ENCODE measurements at regions of chr6 and their contacts with region 1.

Region 1: GRCh38 chr6:108835218-108835850 is 12.9 kb upstream of the ARMC2 start:
- DNase-seq: peak; percentile 85
- ATAC-seq: peak; percentile 99
- H3K4me3 ChIP-seq: no peak overlapping the region
- H3K27ac ChIP-seq: no peak overlapping the region
- H3K4me1 ChIP-seq: no peaks in the 10 kb centered on the region
- H3K27me3 ChIP-seq: no peaks in the 10 kb centered on the region; the same call in 1 of the 2 replicates
- CTCF ChIP-seq: peak; percentile 98

Region 2: GRCh38 chr6:108348655-108349349 is 486.5 kb before region 1 on chr6:
- CTCF ChIA-PET with region 1: no interaction called
- POLR2A ChIA-PET with region 1: interaction called, 14 read pairs
- in situ Hi-C with region 1: no loop called
- intact Hi-C with region 1: no loop called
- DNase-seq: no peak
- ATAC-seq: no peak
- H3K4me3 ChIP-seq: no peak overlapping the region
- H3K27ac ChIP-seq: no peak overlapping the region
- H3K4me1 ChIP-seq: no peaks in the 10 kb centered on the region
- H3K27me3 ChIP-seq: no peaks in the 10 kb centered on the region
- CTCF ChIP-seq: no peak

Region 3: DNA sequence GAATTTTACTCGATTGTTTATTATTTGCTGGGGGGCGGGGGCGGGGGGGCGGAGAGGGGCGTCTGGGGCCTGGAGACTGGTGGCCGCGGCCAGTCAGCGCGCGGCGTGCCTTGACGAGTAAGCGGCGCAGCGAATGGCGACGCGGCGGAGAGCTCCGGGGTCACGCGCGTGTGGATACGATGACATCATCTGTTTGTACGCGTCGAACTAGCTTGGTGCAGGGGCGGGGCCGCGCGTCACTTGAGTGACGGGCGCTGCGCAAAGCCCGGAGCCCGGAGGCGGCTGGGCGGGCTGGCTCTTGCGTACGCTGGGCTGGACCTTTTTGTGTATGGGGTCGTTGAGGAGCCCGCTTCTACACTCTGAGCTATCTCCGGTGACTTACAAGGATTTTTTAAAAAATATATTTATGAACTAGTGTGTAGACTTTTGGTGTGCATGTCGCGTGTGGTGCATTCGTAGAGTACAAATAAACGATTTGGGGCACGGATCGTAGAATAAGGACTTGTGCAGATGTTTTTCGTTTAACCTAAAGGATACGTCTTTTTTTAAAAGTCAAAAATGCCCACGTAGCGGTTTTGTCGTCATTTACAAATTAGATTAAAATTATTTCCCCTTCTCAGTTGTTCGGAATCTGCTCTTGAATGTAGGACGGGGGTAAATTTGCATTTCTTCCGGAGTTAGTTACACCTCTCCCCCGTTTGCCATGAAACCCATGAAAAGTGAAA is 276.8 kb before region 1 on chr6:
- CTCF ChIA-PET with region 1: interaction called, 4 read pairs
- POLR2A ChIA-PET with region 1: no interaction called
- in situ Hi-C with region 1: no loop called
- intact Hi-C with region 1: loop called (anchors 5 kb)
- DNase-seq: peak; percentile 94
- ATAC-seq: peak; percentile 76
- H3K4me3 ChIP-seq: peak overlapping the region; percentile 96 to 98
- H3K27ac ChIP-seq: peak overlapping the region; percentile 82
- H3K4me1 ChIP-seq: peaks cover 13% of the 10 kb centered on the region
- H3K27me3 ChIP-seq: peaks cover 3% of the 10 kb centered on the region; the same call in 1 of the 2 replicates
- CTCF ChIP-seq: no peak

Region 4: DNA sequence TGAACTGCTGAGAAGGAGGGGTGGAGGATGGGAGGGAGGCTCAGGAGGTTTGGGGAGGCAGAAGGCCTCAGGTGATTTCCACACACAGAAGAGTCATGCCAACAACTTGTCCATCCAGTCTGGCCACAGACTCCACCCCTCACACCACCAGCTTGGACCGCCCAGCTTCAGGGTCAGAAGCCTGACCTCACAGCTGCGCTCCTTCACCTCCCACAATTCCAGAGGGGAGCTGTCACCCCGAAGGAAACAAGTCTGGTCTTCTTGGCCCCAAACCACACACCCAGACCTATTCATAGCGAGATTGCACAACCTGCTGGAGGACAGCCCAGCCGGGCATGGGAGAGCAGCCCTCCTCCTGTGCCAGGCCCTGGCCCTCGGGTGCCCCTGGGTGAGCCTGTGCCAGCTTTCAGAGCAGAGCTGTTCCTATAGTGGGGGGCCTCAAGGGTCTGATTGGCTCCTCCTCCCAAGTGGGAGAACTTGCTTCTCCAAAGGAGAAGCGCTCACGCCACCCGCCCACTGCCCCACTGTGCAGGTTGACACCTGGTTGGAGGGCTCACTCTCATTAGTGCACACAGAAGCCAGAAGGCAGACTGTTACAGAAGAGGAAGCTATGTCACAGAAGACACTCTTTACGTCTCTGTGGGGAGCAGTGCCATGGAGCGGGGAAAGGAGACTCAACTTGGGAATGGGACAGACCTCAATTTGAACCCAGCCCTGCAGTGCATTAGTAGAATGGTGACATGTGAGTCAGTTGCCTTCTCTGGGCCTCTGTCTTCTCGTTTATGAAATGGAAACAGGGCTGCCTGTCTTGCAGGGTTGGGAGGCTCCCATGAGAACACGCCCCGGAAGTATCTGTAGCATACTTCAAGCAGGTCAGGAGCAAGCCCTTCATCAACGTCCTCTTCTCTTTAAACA is 145.8 kb before region 1 on chr6:
- CTCF ChIA-PET with region 1: no interaction called
- POLR2A ChIA-PET with region 1: no interaction called
- in situ Hi-C with region 1: no loop called
- intact Hi-C with region 1: no loop called
- DNase-seq: no peak
- ATAC-seq: no peak
- H3K4me3 ChIP-seq: no peak overlapping the region
- H3K27ac ChIP-seq: no peak overlapping the region
- H3K4me1 ChIP-seq: peaks cover 6% of the 10 kb centered on the region; the same call in 1 of the 2 replicates
- H3K27me3 ChIP-seq: no peaks in the 10 kb centered on the region
- CTCF ChIP-seq: no peak

Region 5: DNA sequence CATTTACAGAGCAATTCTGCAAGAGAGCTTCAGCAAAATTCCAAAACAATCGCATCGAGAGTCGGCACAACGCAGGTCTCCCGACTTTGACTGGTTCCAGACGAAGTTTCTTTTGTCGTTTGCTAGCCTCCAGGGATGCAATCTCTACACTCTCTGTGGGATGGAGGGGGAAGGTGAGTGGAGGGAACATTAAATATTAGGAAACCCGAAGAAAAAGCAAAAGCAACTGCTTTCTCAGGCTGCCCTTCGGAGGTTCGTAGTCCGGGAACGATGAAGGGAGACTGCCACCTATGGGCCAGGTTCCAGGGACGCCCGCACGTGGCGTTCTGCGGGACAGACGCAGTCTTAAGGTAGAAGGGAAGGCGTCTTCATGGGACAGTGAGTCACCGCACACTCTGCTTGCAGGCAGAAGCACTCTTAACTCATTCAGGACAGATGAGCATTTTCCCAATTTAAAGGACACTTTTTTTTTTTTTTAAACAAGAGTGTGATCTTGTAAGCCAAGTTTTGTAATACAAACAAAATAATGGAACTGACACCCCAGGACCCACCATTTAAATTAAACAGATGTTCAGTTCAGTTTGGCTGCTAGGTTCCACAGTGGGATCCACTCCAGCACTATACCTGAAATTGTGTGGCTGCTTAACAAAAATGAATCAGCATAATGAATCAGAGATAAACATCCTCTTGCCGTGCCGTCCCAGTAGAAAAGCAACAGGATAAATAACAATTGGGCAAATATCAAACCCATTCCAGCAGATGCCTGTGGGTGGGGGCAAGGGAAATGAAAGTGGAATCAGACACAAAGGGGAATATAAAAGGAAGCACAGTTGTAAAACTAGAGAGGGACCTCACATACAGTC is 52.9 kb before region 1 on chr6:
- CTCF ChIA-PET with region 1: no interaction called
- POLR2A ChIA-PET with region 1: no interaction called
- in situ Hi-C with region 1: no loop called
- intact Hi-C with region 1: loop called (anchors 5 kb)
- DNase-seq: peak; percentile 96
- ATAC-seq: peak; percentile 96
- H3K4me3 ChIP-seq: peak overlapping the region; percentile 49 to 68
- H3K27ac ChIP-seq: peak overlapping the region; percentile 49
- H3K4me1 ChIP-seq: peaks cover 11% of the 10 kb centered on the region
- H3K27me3 ChIP-seq: no peaks in the 10 kb centered on the region; the same call in 1 of the 2 replicates
- CTCF ChIP-seq: peak; percentile 97

Region 6: DNA sequence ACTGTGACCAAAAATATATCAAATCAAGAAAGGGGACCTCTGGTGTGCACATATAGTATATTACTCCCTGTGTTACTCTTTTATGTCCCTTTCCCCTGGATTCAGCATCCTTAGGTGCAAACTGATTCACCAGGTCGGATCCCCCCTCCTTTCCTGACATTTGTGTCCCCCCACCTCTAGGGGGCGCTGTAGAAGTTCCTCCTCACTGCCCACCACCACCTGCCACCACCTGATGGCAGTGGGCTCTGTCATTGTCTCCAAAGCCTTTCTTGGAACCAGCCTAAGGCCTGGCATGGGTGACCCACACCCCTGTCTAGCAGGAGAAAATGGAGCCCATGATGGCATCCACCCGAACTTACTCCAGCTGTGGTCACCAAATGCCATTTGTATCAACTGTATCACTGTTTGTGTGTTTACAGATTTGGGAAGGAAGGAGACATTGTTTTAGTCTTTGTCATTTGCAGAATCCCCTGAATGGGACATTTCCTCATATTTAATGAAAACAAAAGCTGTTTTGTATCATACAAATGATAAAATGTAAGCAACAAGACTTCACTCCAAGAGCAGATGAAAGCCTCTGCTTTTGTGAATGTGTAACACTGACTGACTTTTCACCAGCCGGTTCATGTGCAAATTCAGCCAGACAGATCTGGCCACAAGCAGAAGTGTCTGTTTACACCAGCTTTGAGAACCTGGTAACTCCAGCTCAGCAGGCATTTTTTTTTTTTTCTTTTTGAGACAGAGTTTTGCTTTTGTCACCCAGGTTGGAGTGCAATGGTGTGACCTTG is 79.1 kb after region 1 on chr6:
- CTCF ChIA-PET with region 1: interaction called, 13 read pairs
- POLR2A ChIA-PET with region 1: no interaction called
- in situ Hi-C with region 1: no loop called
- intact Hi-C with region 1: no loop called
- DNase-seq: no peak
- ATAC-seq: peak; percentile 56; the same call in 1 of the 2 replicates
- H3K4me3 ChIP-seq: no peak overlapping the region
- H3K27ac ChIP-seq: no peak overlapping the region
- H3K4me1 ChIP-seq: no peaks in the 10 kb centered on the region
- H3K27me3 ChIP-seq: peaks cover 8% of the 10 kb centered on the region; the same call in 1 of the 2 replicates
- CTCF ChIP-seq: peak; percentile 91